ENCODE measurements at regions of chr3 and their contacts with region 1.

Region 1: GRCh38 chr3:156674046-156674910 is at the start of gene TIPARP:
- DNase-seq: peak; percentile 100
- ATAC-seq: peak; percentile 92 to 96 (median 93)
- H3K4me3 ChIP-seq: peak within 1 kb of the TSS; percentile 72 to 89 (median 78)
- H3K27ac ChIP-seq: peak within 1 kb of the TSS; percentile 92 to 94 (median 93)
- H3K4me1 ChIP-seq: peaks cover 0 to 20% (median 7%) of the 10 kb centered on the region in 4 donors
- H3K27me3 ChIP-seq: no peaks in the 10 kb centered on the region
- CTCF ChIP-seq: peak; percentile 64 to 80 (median 71)
- POLR2A ChIP-seq: peak; percentile 100
- total RNA-seq, gene TIPARP: 10.2 to 19.5 (median 16.4) TPM

Region 2: GRCh38 chr3:156554842-156555687 is 119.2 kb before region 1 on chr3 and contains the start of gene SSR3:
- intact Hi-C with region 1: loop called (anchors 10 kb)
- DNase-seq: peak; percentile 99 to 100 (median 99)
- ATAC-seq: peak; percentile 99 to 100 (median 100)
- H3K4me3 ChIP-seq: peak within 1 kb of the TSS; percentile 84 to 91 (median 85)
- H3K27ac ChIP-seq: peak within 1 kb of the TSS; percentile 73 to 86 (median 79)
- H3K4me1 ChIP-seq: peaks cover 0 to 18% (median 2%) of the 10 kb centered on the region in 4 donors
- H3K27me3 ChIP-seq: no peaks in the 10 kb centered on the region
- CTCF ChIP-seq: peak in 1 of 4 donors; percentile 64
- POLR2A ChIP-seq: peak; percentile 94
- total RNA-seq, gene SSR3: 73.6 to 168 (median 118) TPM

Region 3: DNA sequence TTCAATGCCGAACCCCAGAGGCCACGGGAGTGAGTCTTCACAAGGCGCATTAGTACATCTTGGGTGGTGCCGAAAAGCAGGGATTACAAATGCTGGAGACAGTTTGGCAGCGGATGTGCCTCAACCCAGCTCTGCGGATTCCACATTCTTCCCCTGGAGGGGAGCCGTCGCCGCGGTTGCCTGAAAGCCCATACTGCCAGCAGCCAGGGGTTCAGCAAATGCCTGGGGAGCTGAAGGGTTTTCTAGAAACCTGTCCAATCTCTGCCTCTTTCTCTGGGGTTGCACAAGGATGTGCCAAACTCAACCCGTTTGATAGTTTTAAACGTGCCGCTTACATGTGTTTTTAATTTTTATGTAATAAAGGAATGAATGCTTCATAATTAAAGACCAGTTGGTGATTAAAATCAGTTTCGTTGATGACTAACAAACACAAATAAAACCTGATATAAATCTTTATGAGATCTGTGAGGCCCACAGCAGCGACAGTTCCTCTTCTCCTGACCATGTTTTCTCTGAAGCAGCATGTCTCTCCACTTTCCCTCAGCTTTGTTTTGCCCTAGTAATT is 77.3 kb after region 1 on chr3:
- intact Hi-C with region 1: no loop called
- DNase-seq: no peak
- ATAC-seq: no peak
- H3K4me3 ChIP-seq: no peak overlapping the region
- H3K27ac ChIP-seq: no peak overlapping the region
- H3K4me1 ChIP-seq: no peaks in the 10 kb centered on the region
- H3K27me3 ChIP-seq: no peaks in the 10 kb centered on the region
- CTCF ChIP-seq: no peak
- POLR2A ChIP-seq: no peak

Region 4: GRCh38 chr3:156918746-156919145 is 244.5 kb after region 1 on chr3:
- intact Hi-C with region 1: no loop called
- DNase-seq: no peak
- ATAC-seq: no peak
- H3K4me3 ChIP-seq: no peak overlapping the region
- H3K27ac ChIP-seq: no peak overlapping the region
- H3K4me1 ChIP-seq: no peaks in the 10 kb centered on the region
- H3K27me3 ChIP-seq: no peaks in the 10 kb centered on the region
- CTCF ChIP-seq: no peak
- POLR2A ChIP-seq: no peak

Region 5: DNA sequence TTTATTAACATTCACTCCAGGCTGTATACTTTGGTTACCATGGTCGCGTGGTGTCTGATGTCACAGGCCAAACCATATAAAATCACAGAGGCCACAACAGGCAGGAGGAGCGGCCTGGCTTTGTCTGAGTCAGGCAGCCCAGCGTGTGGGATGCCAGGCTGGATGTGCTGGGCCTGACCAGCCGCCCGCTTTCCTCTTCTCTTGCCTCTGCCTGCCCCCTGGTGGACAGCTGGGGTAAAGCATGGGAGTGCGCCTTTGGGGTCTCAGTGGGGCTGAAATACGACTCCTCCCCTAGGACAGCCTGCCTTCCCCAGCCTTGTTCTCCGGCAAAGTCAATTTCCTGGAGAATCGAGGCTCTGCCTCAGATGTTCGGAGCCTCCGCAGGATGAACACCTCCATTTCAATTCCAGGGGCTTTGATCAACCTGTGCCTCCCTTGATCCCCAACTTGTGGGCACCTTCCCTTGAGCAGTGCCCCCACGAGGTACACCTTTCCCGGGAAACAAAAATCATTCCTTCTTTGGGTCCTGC is 407.5 kb after region 1 on chr3:
- intact Hi-C with region 1: loop called (anchors 10 kb)
- DNase-seq: peak; percentile 87 to 91 (median 89)
- ATAC-seq: peak; percentile 95 to 98 (median 96)
- H3K4me3 ChIP-seq: no peak overlapping the region
- H3K27ac ChIP-seq: peak overlapping the region; percentile 15 to 72 (median 71)
- H3K4me1 ChIP-seq: peaks cover 0 to 16% (median 6%) of the 10 kb centered on the region in 4 donors
- H3K27me3 ChIP-seq: no peaks in the 10 kb centered on the region
- CTCF ChIP-seq: peak; percentile 93 to 99 (median 96)
- POLR2A ChIP-seq: no peak